Breast epithelium (tissue), 4 donors: ENCODE measurements at regions of chr4 and their contacts with region 1.

Region 1: DNA sequence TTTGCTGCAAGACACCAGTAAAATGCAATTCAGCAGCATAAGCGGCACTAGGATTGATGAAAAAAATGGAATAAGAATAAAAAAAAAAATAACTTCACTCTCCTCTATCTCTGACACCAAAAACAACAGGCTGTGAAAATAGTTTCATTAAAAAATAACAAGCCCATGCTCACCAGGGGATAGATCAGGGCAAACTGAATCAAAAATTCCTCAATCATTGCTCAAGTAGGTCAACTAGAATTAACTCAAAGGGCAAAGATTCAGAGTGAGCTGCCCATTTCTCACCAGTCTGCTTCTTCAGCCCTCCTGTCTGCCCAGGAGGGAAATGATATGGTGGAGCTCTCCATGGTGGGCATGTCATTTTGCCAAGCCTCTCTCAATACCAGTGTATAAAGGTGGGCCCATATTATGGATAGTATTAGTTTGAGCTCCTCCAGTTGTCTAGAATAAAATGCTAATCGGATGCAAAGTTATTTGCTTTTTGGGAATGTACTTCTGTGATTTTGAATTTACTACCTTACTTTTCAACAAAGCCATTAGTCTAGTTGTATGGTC is 153.9 kb downstream of the UNC5C start:
- DNase-seq: no peak
- H3K4me3 ChIP-seq: no peak overlapping the region
- H3K27ac ChIP-seq: no peak overlapping the region
- H3K4me1 ChIP-seq: no peaks in the 10 kb centered on the region
- H3K27me3 ChIP-seq: no peaks in the 10 kb centered on the region
- CTCF ChIP-seq: no peak
- POLR2A ChIP-seq: no peak

Region 2: DNA sequence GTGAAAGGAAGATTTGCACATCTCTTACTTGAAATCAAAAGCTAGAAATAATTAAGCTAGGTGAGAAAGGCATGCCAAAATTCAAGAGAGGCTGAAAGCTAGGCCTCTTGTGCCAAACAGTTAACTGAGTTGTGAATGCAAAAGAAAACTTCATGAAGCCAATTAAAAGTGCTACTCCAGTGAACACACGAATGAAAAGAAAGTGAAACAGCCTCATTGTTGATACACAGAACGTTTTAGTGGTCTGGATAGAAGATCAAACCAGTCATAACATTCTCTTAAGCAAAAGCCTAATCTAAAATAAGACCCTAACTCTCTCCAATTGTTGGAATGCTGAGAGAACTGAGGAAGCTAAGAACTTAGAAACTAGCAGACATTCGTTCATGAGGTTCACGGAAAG is 31.6 kb after region 1 on chr4:
- intact Hi-C with region 1: loop called (anchors 2 kb)
- DNase-seq: no peak
- H3K4me3 ChIP-seq: no peak overlapping the region
- H3K27ac ChIP-seq: no peak overlapping the region
- H3K4me1 ChIP-seq: no peaks in the 10 kb centered on the region
- H3K27me3 ChIP-seq: no peaks in the 10 kb centered on the region
- CTCF ChIP-seq: no peak
- POLR2A ChIP-seq: no peak